Activated CD4-positive, alpha-beta T cell treated with anti-CD3 and anti-CD28 coated beads for 36 hours (primary cell): ENCODE measurements at regions of chr6 and their contacts with region 1.

Region 1: DNA sequence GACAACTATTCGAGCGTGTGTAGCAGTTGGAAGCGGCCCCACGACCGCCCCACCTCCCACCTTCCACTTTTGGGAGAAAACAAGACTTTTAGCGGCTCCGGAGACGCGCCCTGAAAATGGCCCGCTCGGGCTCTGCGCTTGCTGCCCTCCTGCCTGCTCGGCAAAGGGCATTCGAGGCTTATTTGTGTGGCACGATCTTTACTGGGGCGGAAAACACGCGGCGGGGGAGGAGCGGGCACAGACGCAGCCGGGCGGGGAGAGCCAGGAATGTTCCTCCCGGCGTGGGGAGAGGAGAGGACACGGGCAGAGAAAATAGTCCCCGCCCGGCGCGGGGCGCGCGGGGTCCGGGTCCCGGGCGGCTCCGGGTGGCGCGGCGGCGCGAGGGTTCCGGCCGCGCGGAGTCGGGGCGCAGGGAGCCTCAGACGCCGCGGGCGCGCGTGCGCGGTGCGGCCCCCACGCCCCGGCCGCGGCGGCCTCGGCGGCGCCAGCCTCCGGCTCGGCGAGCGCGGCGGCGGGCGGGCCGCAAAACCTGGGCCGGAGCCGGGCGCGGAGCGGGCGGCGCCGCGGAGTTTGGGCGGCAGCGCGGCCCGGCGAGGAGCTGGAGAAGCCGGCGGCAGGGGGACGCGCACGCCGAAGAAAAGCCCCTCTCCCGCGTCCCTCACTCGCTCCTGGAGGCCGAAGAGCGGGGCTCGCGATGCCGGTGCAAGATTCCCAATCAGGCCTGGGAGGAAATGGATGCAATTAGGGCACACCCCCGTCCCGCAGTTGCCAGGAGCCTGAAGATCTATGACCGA is 90.0 kb upstream of the ARID1B start:
- DNase-seq: peak; percentile 81
- ATAC-seq: peak; percentile 88
- H3K4me3 Mint-ChIP-seq: peak overlapping the region; percentile 80
- H3K27ac Mint-ChIP-seq: peak overlapping the region; percentile 95
- H3K4me1 Mint-ChIP-seq: peaks cover 39% of the 10 kb centered on the region
- H3K27me3 Mint-ChIP-seq: peaks cover 2% of the 10 kb centered on the region

Region 2: DNA sequence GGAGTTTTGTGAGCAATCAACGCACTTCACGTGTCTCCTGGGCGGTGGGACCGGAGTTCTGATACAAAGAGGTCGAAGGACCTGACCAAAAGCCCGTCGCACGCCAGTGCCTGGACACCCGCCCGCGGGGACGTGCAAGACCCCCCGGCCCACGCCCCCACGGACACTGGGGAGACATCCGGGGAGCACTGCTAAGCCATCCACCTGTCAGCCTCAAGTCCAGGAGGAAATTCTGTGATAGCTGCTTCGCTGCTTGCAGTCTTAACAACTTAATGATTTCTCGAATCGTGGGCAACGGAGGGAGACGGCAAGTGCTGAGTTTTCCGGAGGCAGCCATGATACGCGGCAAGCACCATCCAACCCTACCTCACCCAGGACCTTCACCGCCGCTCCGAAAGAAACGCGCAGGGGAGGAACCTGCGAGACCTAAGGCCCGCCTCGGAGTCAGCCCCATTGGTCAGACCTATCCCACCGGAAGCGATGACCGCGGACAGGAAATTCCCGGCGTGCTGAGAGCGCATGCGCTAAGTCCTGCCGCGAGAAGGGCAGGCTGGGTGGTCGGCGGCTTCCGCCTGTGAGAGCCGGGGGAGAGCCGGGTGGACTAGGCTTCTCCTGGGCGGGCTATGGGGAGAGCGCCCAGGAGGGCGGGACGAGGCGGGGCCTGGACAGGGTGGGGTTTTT is 1373.0 kb before region 1 on chr6 and contains the start of gene TFB1M:
- CTCF ChIA-PET with region 1: interaction called, 3 read pairs
- POLR2A ChIA-PET with region 1: no interaction called
- intact Hi-C with region 1: loop called in 1 of 2 experiments (anchors 1 kb)
- DNase-seq: peak; percentile 99
- ATAC-seq: peak; percentile 95
- H3K4me3 Mint-ChIP-seq: peak within 1 kb of the TSS; percentile 90
- H3K27ac Mint-ChIP-seq: peak within 1 kb of the TSS; percentile 98
- H3K4me1 Mint-ChIP-seq: peaks cover 39% of the 10 kb centered on the region
- H3K27me3 Mint-ChIP-seq: no peaks in the 10 kb centered on the region
- total RNA-seq, gene TFB1M: 45.5 to 56.4 TPM

Region 3: DNA sequence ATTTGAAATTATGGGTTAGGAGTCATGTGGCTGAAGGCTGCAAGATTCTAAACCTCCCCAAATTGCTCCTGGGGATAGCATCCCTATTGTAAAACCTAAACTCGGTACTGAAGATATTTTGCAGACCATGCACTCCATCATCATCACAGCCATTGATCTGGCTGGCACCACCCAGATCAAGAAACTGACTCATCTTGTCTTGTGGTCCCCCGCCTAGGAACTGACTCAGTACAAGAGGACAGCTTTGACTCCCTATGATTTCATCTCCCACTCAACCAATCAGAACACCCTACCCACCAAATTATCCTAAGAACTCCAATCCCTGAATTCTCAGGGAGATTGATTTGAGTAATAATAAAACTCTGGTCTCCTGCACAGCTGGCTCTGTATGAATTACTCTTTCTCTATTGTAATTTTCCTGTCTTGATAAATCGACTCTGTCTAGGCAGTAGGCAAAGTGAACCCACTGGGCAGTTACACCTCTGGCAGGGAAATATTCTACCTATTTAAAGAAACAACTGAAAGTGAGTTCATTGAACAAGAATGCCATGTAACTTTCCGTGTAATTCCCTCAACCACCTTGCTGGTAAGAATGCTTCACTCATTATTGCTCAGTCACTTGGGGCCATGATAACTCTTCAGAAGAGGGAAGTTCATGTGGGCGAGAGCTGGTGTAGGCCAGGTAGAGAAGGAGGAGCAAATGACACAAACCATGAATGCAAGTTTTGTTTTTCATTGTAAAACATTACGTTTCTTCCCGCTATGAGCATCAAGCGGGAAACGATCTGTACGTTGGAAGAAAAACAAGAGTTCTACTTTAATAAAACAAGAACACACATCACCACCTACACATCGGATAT is 512.9 kb before region 1 on chr6:
- CTCF ChIA-PET with region 1: no interaction called
- POLR2A ChIA-PET with region 1: no interaction called
- intact Hi-C with region 1: loop called in 1 of 2 experiments (anchors 5 kb)
- DNase-seq: peak; percentile 73
- ATAC-seq: peak; percentile 95
- H3K4me3 Mint-ChIP-seq: peak overlapping the region; percentile 9
- H3K27ac Mint-ChIP-seq: peak overlapping the region; percentile 88
- H3K4me1 Mint-ChIP-seq: peaks cover 27% of the 10 kb centered on the region
- H3K27me3 Mint-ChIP-seq: no peaks in the 10 kb centered on the region

Region 4: DNA sequence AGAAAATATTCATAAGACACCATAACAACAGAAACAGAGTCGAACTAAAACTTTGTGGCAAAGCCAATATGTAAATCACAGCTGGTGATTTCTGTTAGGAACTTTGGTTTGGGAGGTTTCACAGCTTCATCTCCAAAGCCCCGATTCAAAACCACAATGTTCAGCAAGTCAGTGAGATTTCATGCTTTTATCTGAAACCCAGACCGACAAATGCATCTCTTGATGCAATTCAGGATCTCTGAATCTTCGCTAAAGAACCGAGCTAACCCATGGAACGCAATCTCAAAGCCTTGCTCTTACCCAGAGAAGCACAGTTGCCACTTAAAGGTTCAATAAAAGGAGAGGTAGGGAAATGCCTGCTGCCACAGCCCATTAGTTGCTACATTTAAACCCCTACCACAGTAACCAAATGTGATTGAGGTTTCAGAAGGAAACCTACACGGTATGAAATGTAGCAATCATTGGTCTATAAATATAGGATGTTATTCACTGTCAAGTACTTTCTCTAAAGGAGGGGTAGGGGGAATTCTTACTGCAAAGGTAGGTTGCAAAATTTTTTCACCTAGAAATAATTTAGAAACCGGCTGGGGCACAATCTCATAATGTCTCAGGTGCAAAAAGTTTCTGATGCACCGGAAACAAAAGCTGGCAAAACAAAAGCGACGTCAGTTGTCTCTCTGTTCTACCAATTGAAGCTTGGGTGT is 291.0 kb before region 1 on chr6:
- CTCF ChIA-PET with region 1: no interaction called
- POLR2A ChIA-PET with region 1: no interaction called
- intact Hi-C with region 1: loop called in 1 of 2 experiments (anchors 2 kb)
- DNase-seq: peak; percentile 46
- ATAC-seq: peak; percentile 66
- H3K4me3 Mint-ChIP-seq: peak overlapping the region; percentile 45
- H3K27ac Mint-ChIP-seq: peak overlapping the region; percentile 72
- H3K4me1 Mint-ChIP-seq: peaks cover 77% of the 10 kb centered on the region
- H3K27me3 Mint-ChIP-seq: peaks cover 4% of the 10 kb centered on the region

Region 5: GRCh38 chr6:156564127-156564806 is 122.9 kb before region 1 on chr6:
- CTCF ChIA-PET with region 1: no interaction called
- POLR2A ChIA-PET with region 1: no interaction called
- intact Hi-C with region 1: loop called in 1 of 2 experiments (anchors 2 kb)
- DNase-seq: peak; percentile 89
- ATAC-seq: peak; percentile 98
- H3K4me3 Mint-ChIP-seq: no peak overlapping the region
- H3K27ac Mint-ChIP-seq: no peak overlapping the region
- H3K4me1 Mint-ChIP-seq: peaks cover 7% of the 10 kb centered on the region
- H3K27me3 Mint-ChIP-seq: peaks cover 3% of the 10 kb centered on the region

Region 6: DNA sequence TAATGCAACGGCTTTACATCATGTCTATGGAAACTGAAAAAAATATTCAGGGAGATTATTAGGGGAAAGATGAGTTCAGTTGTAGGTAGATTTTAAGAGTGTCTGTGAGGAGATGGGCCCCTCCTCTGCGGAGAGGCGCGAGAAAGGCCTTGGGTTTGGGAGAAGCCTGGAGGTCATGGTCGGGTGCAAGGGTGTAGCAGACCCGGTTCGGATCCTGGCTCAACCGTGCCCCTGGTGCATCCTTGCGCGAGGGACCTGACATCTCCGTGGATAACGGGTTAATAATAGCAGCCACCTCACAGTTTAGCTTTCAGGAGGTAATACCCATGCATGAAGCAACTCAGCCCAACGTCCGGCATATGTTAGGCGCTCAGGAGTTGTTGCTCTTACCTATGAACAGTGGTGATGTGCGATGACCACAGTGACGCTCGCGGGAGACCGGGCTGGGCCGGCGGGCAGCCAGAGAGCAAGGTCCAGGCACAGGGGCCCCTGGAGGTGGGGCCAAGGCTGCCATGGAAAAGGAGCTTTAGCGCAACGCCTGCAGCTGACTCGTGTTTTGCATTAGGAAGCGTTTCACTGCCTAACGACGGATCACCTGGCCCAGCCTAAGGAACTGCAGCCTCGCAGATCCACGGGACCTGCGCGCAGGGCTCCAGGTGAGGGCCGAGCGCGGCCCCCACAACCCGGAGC is 56.4 kb before region 1 on chr6:
- CTCF ChIA-PET with region 1: no interaction called
- POLR2A ChIA-PET with region 1: no interaction called
- intact Hi-C with region 1: no loop called
- DNase-seq: no peak
- ATAC-seq: no peak
- H3K4me3 Mint-ChIP-seq: no peak overlapping the region
- H3K27ac Mint-ChIP-seq: no peak overlapping the region
- H3K4me1 Mint-ChIP-seq: peaks cover 21% of the 10 kb centered on the region
- H3K27me3 Mint-ChIP-seq: no peaks in the 10 kb centered on the region

Region 7: GRCh38 chr6:156719720-156720563 is 32.8 kb after region 1 on chr6:
- CTCF ChIA-PET with region 1: no interaction called
- POLR2A ChIA-PET with region 1: interaction called, 3 read pairs
- intact Hi-C with region 1: loop called in 1 of 2 experiments (anchors 1 kb)
- DNase-seq: peak; percentile 83
- ATAC-seq: peak; percentile 85
- H3K4me3 Mint-ChIP-seq: peak overlapping the region; percentile 63
- H3K27ac Mint-ChIP-seq: peak overlapping the region; percentile 81
- H3K4me1 Mint-ChIP-seq: peaks cover 20% of the 10 kb centered on the region
- H3K27me3 Mint-ChIP-seq: no peaks in the 10 kb centered on the region

Region 8: DNA sequence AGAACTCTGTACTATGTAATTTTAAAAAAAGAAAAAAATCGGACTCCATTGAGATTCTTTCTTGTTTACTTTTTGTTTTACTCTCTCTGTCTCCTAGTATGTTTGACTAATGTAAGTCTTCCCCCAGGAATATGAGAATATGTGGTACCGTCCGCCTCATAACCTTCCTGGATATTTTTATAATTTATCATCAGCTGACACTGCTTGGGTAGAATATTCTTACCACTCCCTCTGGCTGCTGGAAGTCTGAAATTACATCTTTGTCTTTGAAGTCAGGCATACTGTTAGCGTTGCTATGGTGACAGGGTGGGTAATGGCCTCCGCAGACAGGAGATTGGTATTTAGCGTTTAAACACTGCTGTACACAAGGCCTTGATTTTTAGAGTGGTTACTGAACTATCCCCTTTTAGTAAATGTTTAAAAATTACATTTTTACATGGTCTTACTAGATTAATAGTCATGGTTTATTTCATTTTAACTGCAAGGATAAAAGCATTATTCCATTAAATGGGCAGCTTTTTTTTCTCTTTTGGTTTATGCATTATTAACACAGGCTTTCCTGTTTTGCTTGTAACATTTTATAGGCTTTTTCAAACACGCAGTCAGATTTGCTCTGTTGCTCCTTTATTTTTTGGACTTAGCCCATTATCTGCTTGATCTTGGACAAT is 266.4 kb after region 1 on chr6:
- CTCF ChIA-PET with region 1: no interaction called
- POLR2A ChIA-PET with region 1: no interaction called
- intact Hi-C with region 1: loop called (anchors 5 to 10 kb)
- DNase-seq: peak; percentile 48
- ATAC-seq: peak; percentile 44
- H3K4me3 Mint-ChIP-seq: no peak overlapping the region
- H3K27ac Mint-ChIP-seq: peak overlapping the region; percentile 43
- H3K4me1 Mint-ChIP-seq: peaks cover 66% of the 10 kb centered on the region
- H3K27me3 Mint-ChIP-seq: no peaks in the 10 kb centered on the region